Vagina (tissue), 2 donors: ENCODE measurements at regions of chr19 and their contacts with region 1.

Region 1: GRCh38 chr19:46704379-46705076 is 12.4 kb downstream of the PRKD2 start:
- DNase-seq: no peak
- H3K4me3 ChIP-seq: no peak overlapping the region
- H3K27ac ChIP-seq: no peak overlapping the region
- H3K4me1 ChIP-seq: no peaks in the 10 kb centered on the region
- H3K27me3 ChIP-seq: no peaks in the 10 kb centered on the region
- CTCF ChIP-seq: peak; percentile 76 to 95 (median 86)
- POLR2A ChIP-seq: no peak

Region 2: DNA sequence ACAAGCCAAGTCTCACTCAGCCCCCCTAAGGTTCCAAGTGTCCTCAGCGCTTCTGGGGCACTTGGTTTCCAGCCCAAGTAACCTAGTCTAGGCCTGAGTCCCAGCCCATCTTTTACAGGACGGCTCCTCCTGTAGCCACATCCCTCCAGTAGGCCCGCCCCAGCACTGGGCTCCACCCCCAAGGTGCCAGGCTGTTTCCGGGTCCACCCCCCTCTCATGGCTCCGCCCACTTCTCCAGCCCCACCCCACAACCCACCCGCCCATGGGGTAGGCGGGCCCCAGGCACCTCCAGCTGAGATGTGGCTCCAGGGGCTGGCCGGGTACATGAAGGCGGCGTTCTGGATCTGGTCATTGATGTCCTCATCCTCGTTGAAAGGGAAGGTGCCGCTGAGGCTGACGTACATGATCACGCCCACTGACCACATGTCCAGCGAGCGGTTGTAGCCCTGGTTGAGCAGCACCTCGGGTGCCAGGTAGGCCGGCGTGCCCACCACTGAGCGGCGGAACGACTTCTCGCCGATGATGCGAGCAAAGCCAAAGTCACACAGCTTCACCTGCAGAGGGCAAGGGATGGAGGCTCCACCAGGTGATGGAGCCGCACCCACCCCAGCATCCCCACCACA is 26.3 kb before region 1 on chr19:
- intact Hi-C with region 1: loop called (anchors 1 kb)
- DNase-seq: no peak
- H3K4me3 ChIP-seq: no peak overlapping the region
- H3K27ac ChIP-seq: no peak overlapping the region
- H3K4me1 ChIP-seq: no peaks in the 10 kb centered on the region
- H3K27me3 ChIP-seq: no peaks in the 10 kb centered on the region
- CTCF ChIP-seq: no peak
- POLR2A ChIP-seq: no peak